Transverse colon (tissue), 4 donors: ENCODE measurements at regions of chr6 and their contacts with region 1.

Region 1: DNA sequence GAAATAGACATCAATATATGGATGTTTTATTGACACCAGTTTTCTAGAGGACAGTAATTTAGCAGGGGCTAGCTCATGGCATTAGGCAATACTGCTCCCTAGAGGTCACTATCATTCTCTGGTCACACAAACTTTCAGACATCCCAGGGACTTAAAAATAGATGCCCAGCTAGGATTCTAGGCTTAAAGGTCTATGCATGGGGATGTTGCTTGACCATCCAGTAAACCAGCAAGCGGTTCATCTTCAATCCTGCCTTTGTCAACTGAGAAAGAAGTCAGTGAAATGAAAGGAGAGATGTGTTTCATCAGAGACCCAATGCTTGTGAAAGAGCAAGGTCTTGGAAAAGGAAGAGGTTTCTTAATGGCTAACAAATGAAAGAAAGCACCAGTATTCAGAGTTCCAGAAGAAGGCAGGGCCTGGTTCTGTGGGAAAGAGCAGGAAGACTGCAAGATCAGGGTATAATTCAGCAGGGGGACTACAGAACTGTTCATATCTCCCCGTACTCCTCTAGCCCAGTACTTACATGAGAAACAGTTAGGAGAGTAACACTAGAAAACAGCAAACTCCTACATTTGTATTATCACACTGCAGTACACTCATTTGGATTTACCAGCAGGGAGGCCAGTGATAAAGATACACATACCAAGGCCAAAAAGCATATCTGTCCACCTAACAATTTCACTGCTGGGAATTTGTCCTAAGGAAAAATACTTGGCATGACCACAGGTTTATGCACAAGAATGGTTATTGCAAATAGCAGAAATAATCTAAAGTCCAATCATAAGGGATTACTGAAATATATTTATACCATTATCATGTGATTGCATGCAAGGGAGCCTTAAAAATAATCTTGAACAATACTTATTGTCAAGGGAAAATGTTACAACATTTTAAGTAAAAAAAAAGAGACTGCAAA is 151.4 kb upstream of the LAMA2 start:
- DNase-seq: no peak
- H3K4me3 ChIP-seq: no peak overlapping the region
- H3K27ac ChIP-seq: no peak overlapping the region
- H3K4me1 ChIP-seq: no peaks in the 10 kb centered on the region
- H3K27me3 ChIP-seq: no peaks in the 10 kb centered on the region
- CTCF ChIP-seq: peak; percentile 19 to 48 (median 34)
- EP300 ChIP-seq: no peak
- POLR2A ChIP-seq: no peak

Region 2: GRCh38 chr6:128630182-128630581 is 101.3 kb before region 1 on chr6:
- in situ Hi-C with region 1: no loop called
- intact Hi-C with region 1: no loop called
- DNase-seq: peak; percentile 7
- H3K4me3 ChIP-seq: no peak overlapping the region
- H3K27ac ChIP-seq: no peak overlapping the region
- H3K4me1 ChIP-seq: no peaks in the 10 kb centered on the region
- H3K27me3 ChIP-seq: no peaks in the 10 kb centered on the region
- CTCF ChIP-seq: no peak
- EP300 ChIP-seq: no peak
- POLR2A ChIP-seq: no peak

Region 3: DNA sequence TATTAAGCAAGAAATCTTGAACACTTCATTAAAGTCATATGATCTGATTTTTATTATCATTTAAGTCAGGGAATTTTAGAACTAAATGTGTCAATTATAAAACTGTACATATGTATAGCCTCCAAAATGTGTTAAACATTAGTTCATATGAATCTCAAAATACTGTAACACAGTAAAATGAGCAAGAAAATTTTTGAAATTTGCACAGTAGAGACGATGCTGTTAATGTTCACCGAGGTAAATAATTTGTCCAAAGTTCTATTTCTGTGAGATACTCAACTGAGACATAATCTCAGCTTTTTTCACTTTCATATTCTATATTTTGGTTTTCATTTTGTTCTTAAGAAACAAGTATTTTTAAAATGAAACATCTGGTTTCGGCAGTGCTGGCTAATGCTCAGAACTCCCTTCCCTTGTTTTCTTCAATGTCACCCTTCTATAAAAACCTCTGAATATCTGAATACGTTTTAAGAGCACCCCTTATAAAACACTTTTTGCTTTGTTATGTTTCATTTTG is 504.6 kb after region 1 on chr6:
- in situ Hi-C with region 1: loop called in 1 of 4 experiments (anchors 25 kb)
- intact Hi-C with region 1: no loop called
- DNase-seq: no peak
- H3K4me3 ChIP-seq: no peak overlapping the region
- H3K27ac ChIP-seq: no peak overlapping the region
- H3K4me1 ChIP-seq: peaks cover 0 to 3% (median 0%) of the 10 kb centered on the region in 4 donors
- H3K27me3 ChIP-seq: no peaks in the 10 kb centered on the region
- CTCF ChIP-seq: no peak
- EP300 ChIP-seq: no peak
- POLR2A ChIP-seq: no peak

Region 4: DNA sequence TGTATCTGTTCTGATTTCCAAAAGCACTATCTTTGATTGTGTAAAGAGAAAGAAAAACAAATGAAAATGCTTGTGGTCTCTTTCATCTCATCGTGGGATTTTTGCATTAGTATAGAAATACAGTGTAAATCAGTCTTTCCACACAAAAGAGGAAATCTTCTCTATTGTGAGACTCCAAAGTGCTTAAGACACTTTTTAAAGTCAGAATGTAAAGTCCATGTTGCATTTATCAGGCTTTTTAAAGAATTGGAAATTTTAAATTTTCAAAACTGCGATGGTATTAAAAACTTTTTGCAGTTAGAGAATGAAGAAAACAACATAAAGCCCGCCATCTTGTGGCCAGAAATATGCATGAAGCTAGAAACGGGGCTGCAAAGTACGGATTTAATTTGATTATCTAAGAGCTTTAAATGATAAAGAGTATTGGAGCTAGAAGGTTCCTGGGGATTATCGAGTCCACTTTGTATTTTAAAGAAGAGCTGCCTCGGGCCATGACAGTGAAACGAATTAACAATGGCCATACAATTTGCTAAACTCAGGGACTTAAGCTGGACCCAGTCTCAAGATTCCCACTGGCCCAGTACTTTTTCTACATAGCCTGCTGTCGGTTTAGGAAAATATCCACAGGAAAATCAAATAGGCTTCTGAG is 638.9 kb after region 1 on chr6:
- in situ Hi-C with region 1: loop called in 1 of 4 experiments (anchors 25 kb)
- intact Hi-C with region 1: no loop called
- DNase-seq: peak; percentile 35
- H3K4me3 ChIP-seq: no peak overlapping the region
- H3K27ac ChIP-seq: no peak overlapping the region
- H3K4me1 ChIP-seq: peaks cover 0 to 9% (median 0%) of the 10 kb centered on the region in 4 donors
- H3K27me3 ChIP-seq: no peaks in the 10 kb centered on the region
- CTCF ChIP-seq: peak; percentile 56 to 73 (median 60)
- EP300 ChIP-seq: no peak
- POLR2A ChIP-seq: no peak